Activated CD4-positive, alpha-beta T cell treated with anti-CD3 and anti-CD28 coated beads, Interleukin-2, amount 10 ng/mL, durations not matched to agents 24 days and 14 days (primary cell): ENCODE measurements at regions of chr19 and their contacts with region 1.

Region 1: DNA sequence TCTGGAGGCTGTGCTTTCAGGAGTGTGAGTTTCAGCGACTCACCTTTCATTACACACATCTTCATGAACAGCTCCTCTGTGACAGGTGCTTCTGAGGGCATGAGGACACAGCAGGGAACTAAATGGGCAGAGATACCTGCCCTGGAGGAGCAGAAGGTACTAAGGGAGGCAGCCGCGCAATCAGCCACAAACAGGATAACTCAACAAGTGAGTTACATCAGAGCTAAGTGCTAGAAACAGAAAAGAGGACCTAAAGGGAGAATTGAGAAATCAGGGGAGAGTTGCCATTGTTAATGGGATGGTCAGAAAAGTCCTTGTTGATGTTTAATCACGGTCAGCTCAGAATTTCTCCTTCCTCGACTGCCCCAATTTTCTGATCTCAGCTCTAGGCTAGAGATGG is 42.5 kb downstream of the SYDE1 start:
- DNase-seq: no peak
- H3K4me3 Mint-ChIP-seq: no peak overlapping the region
- H3K27ac Mint-ChIP-seq: no peak overlapping the region
- H3K4me1 Mint-ChIP-seq: peaks cover 4% of the 10 kb centered on the region
- H3K27me3 Mint-ChIP-seq: peaks cover 2% of the 10 kb centered on the region

Region 2: GRCh38 chr19:15091901-15092753 is 57.6 kb before region 1 on chr19:
- intact Hi-C with region 1: loop called (anchors 2 kb)
- DNase-seq: peak; percentile 88
- H3K4me3 Mint-ChIP-seq: no peak overlapping the region
- H3K27ac Mint-ChIP-seq: peak overlapping the region; percentile 41
- H3K4me1 Mint-ChIP-seq: peaks cover 3% of the 10 kb centered on the region
- H3K27me3 Mint-ChIP-seq: no peaks in the 10 kb centered on the region

Region 3: GRCh38 chr19:15101479-15102082 is 48.2 kb before region 1 on chr19:
- intact Hi-C with region 1: loop called (anchors 2 kb)
- DNase-seq: peak; percentile 87
- H3K4me3 Mint-ChIP-seq: no peak overlapping the region
- H3K27ac Mint-ChIP-seq: no peak overlapping the region
- H3K4me1 Mint-ChIP-seq: peaks cover 4% of the 10 kb centered on the region
- H3K27me3 Mint-ChIP-seq: peaks cover 14% of the 10 kb centered on the region